ENCODE measurements at regions of chr22 and their contacts with region 1.

Region 1: DNA sequence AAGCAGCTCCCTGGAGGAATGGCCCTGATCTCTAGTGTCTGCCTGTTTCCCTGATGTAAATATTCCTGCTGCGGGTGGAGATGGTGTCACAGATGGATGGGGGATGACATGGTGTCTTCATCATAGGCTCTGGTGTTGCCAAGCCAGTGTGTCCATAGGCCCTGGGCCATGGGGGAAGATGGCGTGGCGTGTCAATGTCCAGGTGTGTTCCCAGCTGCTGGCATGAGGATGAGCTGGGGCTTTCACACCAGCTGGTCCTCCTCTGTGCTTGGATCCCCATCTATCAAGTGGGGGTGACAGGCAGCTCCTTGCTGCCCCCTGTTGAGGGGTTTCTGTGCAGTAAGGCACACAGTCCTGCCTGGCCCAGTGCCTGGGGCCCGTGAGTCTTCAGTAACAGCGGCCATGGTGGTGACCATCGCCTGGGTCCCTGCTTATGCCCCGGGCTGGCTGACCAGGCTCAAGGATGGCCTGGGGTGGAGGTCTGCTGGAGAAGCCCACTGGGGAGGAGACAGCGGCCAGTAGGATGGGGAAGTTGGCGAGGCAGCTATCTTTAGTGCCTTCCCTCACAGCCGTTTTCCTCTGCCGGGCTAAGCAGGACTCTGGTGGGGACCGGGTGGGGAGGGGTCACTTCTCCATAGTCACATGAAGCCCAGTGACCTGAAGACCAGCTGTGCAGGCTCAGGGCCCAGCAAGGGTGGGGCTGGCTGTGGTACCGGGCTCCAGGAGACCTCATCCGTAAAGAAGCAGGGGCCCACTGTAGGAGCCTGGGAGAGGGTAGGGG is 12.7 kb downstream of the RPL3 start:
- DNase-seq: peak in 13 of 14 experiments; percentile 29 to 77 (median 58)
- ATAC-seq: peak; percentile 50
- H3K4me3 ChIP-seq: no peak overlapping the region
- H3K4me3 Mint-ChIP-seq: no peak overlapping the region
- H3K27ac ChIP-seq: no peak overlapping the region
- H3K27ac Mint-ChIP-seq: no peak overlapping the region
- H3K4me1 ChIP-seq: peaks cover 27% of the 10 kb centered on the region
- H3K4me1 Mint-ChIP-seq: peaks cover 9% of the 10 kb centered on the region
- H3K27me3 ChIP-seq: no peaks in the 10 kb centered on the region
- H3K27me3 Mint-ChIP-seq: peaks cover 4% of the 10 kb centered on the region
- CTCF ChIP-seq: peak; percentile 56

Region 2: DNA sequence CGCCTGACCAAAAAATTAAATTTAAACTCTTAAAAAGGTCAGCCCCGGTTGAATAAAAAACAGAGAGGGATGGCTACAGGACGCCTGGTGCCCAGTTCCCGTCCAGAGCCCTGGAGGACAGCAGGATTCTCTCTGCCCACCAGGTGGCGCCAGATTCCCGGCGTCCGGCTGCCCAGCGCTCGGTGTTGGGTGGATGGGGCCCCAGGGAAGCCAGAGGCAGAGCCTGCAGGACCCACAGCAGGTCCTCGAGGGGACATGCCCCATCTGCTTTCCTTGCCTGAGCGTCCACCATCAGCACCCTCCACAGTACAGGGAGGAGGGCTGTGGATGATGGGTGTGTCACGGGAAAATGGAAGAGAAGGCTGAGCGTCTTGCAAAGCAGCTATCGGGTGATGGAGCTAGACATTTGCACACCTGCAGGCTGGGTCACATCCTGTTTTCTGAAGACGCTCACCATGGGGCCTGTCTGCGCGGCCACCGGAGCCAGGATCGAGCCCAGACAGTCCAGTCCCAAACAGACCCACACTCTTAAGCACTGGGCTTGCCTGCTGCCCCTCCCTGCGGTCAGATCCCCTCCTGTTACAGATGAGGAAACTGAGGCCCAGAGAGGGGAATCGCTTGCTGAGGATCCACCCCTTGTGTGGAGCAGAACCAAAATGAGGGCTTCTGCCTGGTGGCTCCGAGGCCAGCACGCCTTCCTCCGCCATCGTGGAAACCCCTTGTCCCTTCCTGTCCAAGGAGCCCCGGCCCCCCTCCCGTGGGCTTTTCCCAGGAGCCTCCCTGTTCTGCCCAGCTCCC is 135.7 kb before region 1 on chr22:
- CTCF ChIA-PET with region 1: interaction called, 22 read pairs
- POLR2A ChIA-PET with region 1: interaction called, 29 read pairs
- intact Hi-C with region 1: loop called (anchors 1 kb)
- DNase-seq: peak; percentile 63 to 90 (median 84)
- ATAC-seq: peak; percentile 74
- H3K4me3 ChIP-seq: peak overlapping the region; percentile 41
- H3K4me3 Mint-ChIP-seq: peak overlapping the region; percentile 69
- H3K27ac ChIP-seq: peak overlapping the region in 1 of 2 donors; percentile 58
- H3K27ac Mint-ChIP-seq: peak overlapping the region; percentile 97
- H3K4me1 ChIP-seq: peaks cover 58% of the 10 kb centered on the region
- H3K4me1 Mint-ChIP-seq: peaks cover 47% of the 10 kb centered on the region
- H3K27me3 ChIP-seq: no peaks in the 10 kb centered on the region
- H3K27me3 Mint-ChIP-seq: no peaks in the 10 kb centered on the region
- CTCF ChIP-seq: peak; percentile 99

Region 3: GRCh38 chr22:39215426-39216120 is 91.2 kb before region 1 on chr22:
- CTCF ChIA-PET with region 1: interaction called, 4 read pairs
- POLR2A ChIA-PET with region 1: no interaction called
- intact Hi-C with region 1: loop called (anchors 2 to 5 kb)
- DNase-seq: peak in 10 of 14 experiments; percentile 17 to 73 (median 36)
- ATAC-seq: peak; percentile 96
- H3K4me3 ChIP-seq: no peak overlapping the region
- H3K4me3 Mint-ChIP-seq: no peak overlapping the region
- H3K27ac ChIP-seq: no peak overlapping the region
- H3K27ac Mint-ChIP-seq: no peak overlapping the region
- H3K4me1 ChIP-seq: no peaks in the 10 kb centered on the region
- H3K4me1 Mint-ChIP-seq: peaks cover 4% of the 10 kb centered on the region
- H3K27me3 ChIP-seq: peaks cover 5 to 14% of the 10 kb centered on the region in 2 experiments
- H3K27me3 Mint-ChIP-seq: peaks cover 23% of the 10 kb centered on the region
- CTCF ChIP-seq: peak; percentile 14

Region 4: DNA sequence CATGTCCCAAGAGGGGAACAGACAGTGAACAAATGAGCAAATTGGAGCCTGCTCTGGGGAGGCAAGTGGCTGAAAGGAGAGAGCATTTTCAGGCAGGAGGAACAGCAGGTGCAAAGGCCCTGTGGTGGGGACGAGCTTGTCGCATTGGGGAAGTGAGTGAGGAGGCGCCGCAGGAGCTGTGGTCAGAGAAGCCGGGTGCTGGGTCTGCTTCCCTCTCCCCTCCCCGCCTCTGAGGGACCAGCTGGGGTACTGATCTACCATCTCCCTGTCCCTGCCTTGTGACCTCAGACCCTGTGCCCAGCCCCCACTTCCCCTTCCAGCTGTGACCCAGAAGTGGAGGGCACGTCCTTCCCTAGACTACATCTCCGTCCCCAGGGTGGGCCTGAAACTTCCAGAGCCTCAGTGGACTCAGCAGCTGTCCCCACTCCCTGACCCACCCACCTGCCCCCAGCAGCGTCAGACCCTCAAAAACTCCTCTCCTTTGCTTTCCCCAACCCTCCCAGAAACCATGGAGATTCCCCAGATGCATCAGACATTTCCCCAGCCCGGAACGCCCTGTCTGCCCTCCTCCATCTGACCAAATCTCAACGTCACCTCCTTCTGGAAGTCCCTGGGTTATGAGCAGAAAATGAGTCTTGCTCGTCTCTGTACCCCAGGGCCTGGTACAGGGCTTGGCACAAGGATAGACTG is 42.3 kb before region 1 on chr22:
- CTCF ChIA-PET with region 1: no interaction called
- POLR2A ChIA-PET with region 1: no interaction called
- intact Hi-C with region 1: no loop called
- DNase-seq: peak in 2 of 14 experiments; percentile 59 to 68
- ATAC-seq: no peak
- H3K4me3 ChIP-seq: no peak overlapping the region
- H3K4me3 Mint-ChIP-seq: no peak overlapping the region
- H3K27ac ChIP-seq: no peak overlapping the region
- H3K27ac Mint-ChIP-seq: no peak overlapping the region
- H3K4me1 ChIP-seq: no peaks in the 10 kb centered on the region
- H3K4me1 Mint-ChIP-seq: no peaks in the 10 kb centered on the region
- H3K27me3 ChIP-seq: no peaks in the 10 kb centered on the region
- H3K27me3 Mint-ChIP-seq: no peaks in the 10 kb centered on the region
- CTCF ChIP-seq: no peak

Measured in CD4-positive, alpha-beta T cell (primary cell).